GM12878 (cell line): ENCODE measurements at regions of chr5 and their contacts with region 1.

Region 1: GRCh38 chr5:76582230-76583162 is 40.7 kb downstream of the F2RL2 start:
- DNase-seq: peak; percentile 79
- ATAC-seq: peak; percentile 98
- H3K4me3 ChIP-seq: no peak overlapping the region
- H3K27ac ChIP-seq: peak overlapping the region; percentile 66
- H3K4me1 ChIP-seq: peaks cover 14% of the 10 kb centered on the region; the same call in 1 of the 2 replicates
- H3K27me3 ChIP-seq: no peaks in the 10 kb centered on the region
- CTCF ChIP-seq: no peak
- EP300 ChIP-seq: peak; percentile 81 to 98; a peak in 3 of 4 replicates
- POLR2A ChIP-seq: no peak
- RAD21 ChIP-seq: no peak

Region 2: GRCh38 chr5:76175051-76175666 is 407.3 kb before region 1 on chr5:
- CTCF ChIA-PET with region 1: interaction called, 25 read pairs
- POLR2A ChIA-PET with region 1: no interaction called
- RAD21 ChIA-PET with region 1: interaction called, 8 read pairs
- SMC1A ChIA-PET with region 1: interaction called, 10 read pairs
- in situ Hi-C with region 1: no loop called
- intact Hi-C with region 1: no loop called
- DNase-seq: peak; percentile 32
- ATAC-seq: peak; percentile 82
- H3K4me3 ChIP-seq: peak overlapping the region; percentile 45; the same call in 1 of the 2 replicates
- H3K27ac ChIP-seq: peak overlapping the region; percentile 57
- H3K4me1 ChIP-seq: peaks cover 25% of the 10 kb centered on the region
- H3K27me3 ChIP-seq: no peaks in the 10 kb centered on the region
- CTCF ChIP-seq: peak; percentile 83 to 89 (median 84)
- EP300 ChIP-seq: no peak
- POLR2A ChIP-seq: no peak
- RAD21 ChIP-seq: peak; percentile 94

Region 3: GRCh38 chr5:76303921-76304320 is 278.6 kb before region 1 on chr5:
- CTCF ChIA-PET with region 1: interaction called, 7 read pairs
- POLR2A ChIA-PET with region 1: no interaction called
- RAD21 ChIA-PET with region 1: interaction called, 11 read pairs
- SMC1A ChIA-PET with region 1: interaction called, 5 read pairs
- in situ Hi-C with region 1: no loop called
- intact Hi-C with region 1: no loop called
- DNase-seq: peak; percentile 34
- ATAC-seq: peak; percentile 90
- H3K4me3 ChIP-seq: no peak overlapping the region
- H3K27ac ChIP-seq: no peak overlapping the region
- H3K4me1 ChIP-seq: peaks cover 6% of the 10 kb centered on the region; the same call in 1 of the 2 replicates
- H3K27me3 ChIP-seq: no peaks in the 10 kb centered on the region
- CTCF ChIP-seq: no peak
- EP300 ChIP-seq: peak in 1 of 2 experiments; percentile 17; a peak in 1 of 4 replicates
- POLR2A ChIP-seq: no peak
- RAD21 ChIP-seq: no peak

Region 4: GRCh38 chr5:76402886-76403765 is 179.4 kb before region 1 on chr5 and contains the start of gene IQGAP2:
- CTCF ChIA-PET with region 1: interaction called, 94 read pairs
- POLR2A ChIA-PET with region 1: interaction called, 9 read pairs
- RAD21 ChIA-PET with region 1: interaction called, 127 read pairs
- SMC1A ChIA-PET with region 1: interaction called, 81 read pairs
- in situ Hi-C with region 1: no loop called
- intact Hi-C with region 1: loop called (anchors 2 kb)
- DNase-seq: no peak
- ATAC-seq: peak; percentile 76
- H3K4me3 ChIP-seq: peak within 1 kb of the TSS; percentile 86
- H3K27ac ChIP-seq: peak within 1 kb of the TSS; percentile 91
- H3K4me1 ChIP-seq: peaks cover 25% of the 10 kb centered on the region
- H3K27me3 ChIP-seq: no peaks in the 10 kb centered on the region
- CTCF ChIP-seq: peak; percentile 78 to 93 (median 80)
- EP300 ChIP-seq: peak in 1 of 2 experiments; percentile 55; a peak in 1 of 4 replicates
- POLR2A ChIP-seq: peak; percentile 78
- RAD21 ChIP-seq: peak; percentile 68
- polyA plus RNA-seq, gene IQGAP2: 17.7 to 17.9 TPM

Region 5: DNA sequence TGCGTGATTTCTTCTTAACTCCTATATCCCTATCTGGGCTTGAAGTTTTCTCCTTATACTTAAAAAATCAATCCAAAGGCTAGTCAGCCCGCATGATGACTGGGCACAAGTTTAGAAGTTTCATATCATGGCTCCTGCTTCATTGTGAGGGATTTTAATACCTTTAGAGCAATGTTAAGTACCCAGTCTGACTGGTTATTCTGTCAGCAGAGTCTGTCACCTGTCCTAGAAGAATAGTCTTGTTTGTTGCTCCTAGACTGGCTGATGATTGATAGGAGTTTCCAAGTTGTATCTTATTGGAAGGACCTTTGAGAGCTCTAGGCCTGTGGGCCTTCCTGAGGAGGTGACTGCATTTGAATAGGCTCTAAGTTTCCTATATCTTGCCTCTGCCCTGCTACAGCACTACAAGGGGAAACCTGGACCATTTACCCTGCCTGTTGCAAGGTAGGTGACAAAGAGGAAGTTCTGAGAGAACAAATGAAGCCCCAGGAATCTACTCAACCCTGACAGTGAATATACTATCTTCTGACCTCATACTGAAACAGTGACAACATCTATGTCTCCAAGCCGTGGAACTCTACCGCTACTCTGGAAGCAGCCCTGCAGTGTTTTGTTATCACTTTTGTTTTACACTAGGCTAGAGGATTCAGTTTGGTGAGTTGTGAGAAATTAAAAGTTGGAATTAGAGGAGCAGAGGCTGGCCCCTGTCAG is 25.8 kb before region 1 on chr5:
- CTCF ChIA-PET with region 1: interaction called, 25 read pairs
- POLR2A ChIA-PET with region 1: interaction called, 3 read pairs
- RAD21 ChIA-PET with region 1: interaction called, 14 read pairs
- SMC1A ChIA-PET with region 1: interaction called, 24 read pairs
- in situ Hi-C with region 1: no loop called
- intact Hi-C with region 1: no loop called
- DNase-seq: peak; percentile 65
- ATAC-seq: peak; percentile 98
- H3K4me3 ChIP-seq: no peak overlapping the region
- H3K27ac ChIP-seq: peak overlapping the region; percentile 38
- H3K4me1 ChIP-seq: peaks cover 19% of the 10 kb centered on the region
- H3K27me3 ChIP-seq: no peaks in the 10 kb centered on the region
- CTCF ChIP-seq: no peak
- EP300 ChIP-seq: no peak
- POLR2A ChIP-seq: no peak
- RAD21 ChIP-seq: peak; percentile 29; the same call in 1 of the 2 replicates

Region 6: DNA sequence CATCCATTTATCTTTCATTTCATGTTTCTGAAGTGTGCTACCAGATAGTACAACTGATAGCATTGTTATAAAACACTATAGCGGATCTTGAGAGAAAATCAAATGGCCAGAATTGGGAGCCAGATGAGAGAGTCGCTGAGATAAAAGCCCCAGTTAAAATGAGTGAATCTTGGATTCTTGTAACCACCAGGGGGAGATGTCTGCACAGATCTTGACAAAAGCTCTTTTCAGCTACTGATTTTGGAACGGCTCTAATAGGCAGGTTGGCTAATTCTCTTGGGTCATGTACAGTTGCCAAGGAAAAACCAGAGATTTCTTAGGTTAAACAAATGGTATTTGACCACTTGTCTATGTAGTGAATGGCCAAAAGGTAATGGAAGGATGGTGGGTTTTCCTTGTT is 19.0 kb after region 1 on chr5:
- CTCF ChIA-PET with region 1: interaction called, 14 read pairs
- POLR2A ChIA-PET with region 1: no interaction called
- RAD21 ChIA-PET with region 1: interaction called, 6 read pairs
- SMC1A ChIA-PET with region 1: interaction called, 7 read pairs
- in situ Hi-C with region 1: no loop called
- intact Hi-C with region 1: no loop called
- DNase-seq: no peak
- ATAC-seq: peak; percentile 89
- H3K4me3 ChIP-seq: no peak overlapping the region
- H3K27ac ChIP-seq: no peak overlapping the region
- H3K4me1 ChIP-seq: no peaks in the 10 kb centered on the region
- H3K27me3 ChIP-seq: no peaks in the 10 kb centered on the region
- CTCF ChIP-seq: peak; percentile 58 to 72 (median 71); a peak in 5 of 6 replicates
- EP300 ChIP-seq: no peak
- POLR2A ChIP-seq: no peak
- RAD21 ChIP-seq: peak; percentile 94